Caco-2 (cell line): ENCODE measurements at regions of chr20 and their contacts with region 1.

Region 1: DNA sequence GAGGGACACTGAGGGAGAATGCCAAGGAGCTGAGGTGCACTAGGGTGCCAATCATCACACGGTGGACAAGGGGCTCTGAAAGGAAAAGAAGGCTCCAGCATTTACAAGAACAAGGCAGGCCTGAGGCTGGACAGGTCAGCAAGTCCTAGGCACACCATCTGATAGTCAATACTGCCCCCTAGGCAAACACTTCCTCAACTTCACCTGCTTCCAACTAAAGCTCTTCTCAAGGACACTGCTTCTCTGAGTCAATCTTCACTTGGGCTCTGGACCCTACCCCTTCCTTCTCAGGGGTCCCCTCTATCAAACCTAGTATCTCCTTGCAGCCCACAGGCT is 37.7 kb upstream of the SLC4A11 start:
- DNase-seq: peak in 1 of 2 experiments; percentile 45
- H3K4me3 ChIP-seq: no peak overlapping the region
- H3K4me3 Mint-ChIP-seq: no peak overlapping the region
- H3K27ac Mint-ChIP-seq: no peak overlapping the region
- H3K4me1 ChIP-seq: no peaks in the 10 kb centered on the region
- H3K4me1 Mint-ChIP-seq: no peaks in the 10 kb centered on the region
- H3K27me3 ChIP-seq: no peaks in the 10 kb centered on the region
- H3K27me3 Mint-ChIP-seq: peaks cover 2% of the 10 kb centered on the region
- CTCF ChIP-seq: peak; percentile 24 to 39

Region 2: DNA sequence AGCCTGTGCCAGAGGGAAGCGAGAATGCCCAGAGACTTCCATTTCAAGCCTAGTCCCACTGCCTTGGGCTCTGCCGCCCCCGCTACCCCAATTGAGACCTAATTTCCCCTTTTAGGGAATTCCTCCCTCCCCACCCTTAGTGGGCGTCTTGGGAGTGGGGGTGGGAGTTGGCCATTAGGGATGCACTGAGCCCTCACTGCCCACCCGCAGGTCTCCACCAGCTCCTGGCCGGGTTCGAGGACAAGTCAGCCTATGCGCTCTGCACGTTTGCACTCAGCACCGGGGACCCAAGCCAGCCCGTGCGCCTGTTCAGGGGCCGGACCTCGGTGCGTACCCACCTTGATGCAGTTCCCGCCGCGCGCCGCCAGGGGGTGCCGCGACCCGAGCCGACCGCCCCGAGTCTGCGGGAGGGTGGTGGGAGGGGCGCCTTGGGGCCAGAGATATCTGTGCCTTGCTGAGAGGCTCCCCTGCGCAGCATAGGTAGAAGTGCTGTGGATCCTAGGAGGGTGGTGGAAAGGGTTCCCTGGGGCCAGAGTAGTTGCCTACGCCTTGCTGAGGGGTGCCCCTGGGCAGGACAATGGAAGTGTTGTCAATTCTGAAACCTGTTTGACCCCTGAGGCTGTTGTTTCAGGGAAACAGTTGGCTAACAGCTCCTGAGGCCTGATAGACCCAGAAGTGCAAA is 58.2 kb before region 1 on chr20:
- CTCF ChIA-PET with region 1: no interaction called
- POLR2A ChIA-PET with region 1: interaction called, 3 read pairs
- intact Hi-C with region 1: loop called (anchors 2 kb)
- DNase-seq: peak; percentile 55 to 75
- H3K4me3 ChIP-seq: no peak overlapping the region
- H3K4me3 Mint-ChIP-seq: no peak overlapping the region
- H3K27ac Mint-ChIP-seq: no peak overlapping the region
- H3K4me1 ChIP-seq: peaks cover 19% of the 10 kb centered on the region
- H3K4me1 Mint-ChIP-seq: peaks cover 9% of the 10 kb centered on the region
- H3K27me3 ChIP-seq: no peaks in the 10 kb centered on the region
- H3K27me3 Mint-ChIP-seq: no peaks in the 10 kb centered on the region
- CTCF ChIP-seq: peak; percentile 67 to 76